ENCODE measurements at regions of chr5 and their contacts with region 1.

Region 1: DNA sequence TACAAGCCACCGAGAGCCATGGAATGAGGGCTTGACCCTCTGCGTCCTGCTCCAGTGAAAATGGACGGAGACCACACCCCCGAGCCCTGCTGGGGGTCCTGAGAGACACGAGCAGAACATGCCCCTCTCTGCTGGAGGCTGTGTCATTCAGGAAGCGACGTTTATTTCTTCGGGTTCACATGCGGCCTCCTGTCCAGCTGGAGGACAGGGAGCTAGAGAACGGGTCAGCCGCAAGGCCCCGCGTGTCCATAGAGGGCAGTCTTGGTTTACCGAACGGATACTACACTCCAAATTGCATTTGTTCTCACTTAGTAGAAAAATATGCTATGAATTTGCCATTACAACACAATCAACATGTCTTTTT is 36.1 kb downstream of the MRPL36 start:
- DNase-seq: peak; percentile 65
- H3K4me3 ChIP-seq: no peak overlapping the region
- H3K27ac ChIP-seq: no peak overlapping the region
- H3K4me1 ChIP-seq: no peaks in the 10 kb centered on the region
- H3K27me3 ChIP-seq: peaks cover 0 to 2% of the 10 kb centered on the region in 2 experiments
- CTCF ChIP-seq: peak; percentile 73 to 83
- POLR2A ChIP-seq: no peak

Region 2: DNA sequence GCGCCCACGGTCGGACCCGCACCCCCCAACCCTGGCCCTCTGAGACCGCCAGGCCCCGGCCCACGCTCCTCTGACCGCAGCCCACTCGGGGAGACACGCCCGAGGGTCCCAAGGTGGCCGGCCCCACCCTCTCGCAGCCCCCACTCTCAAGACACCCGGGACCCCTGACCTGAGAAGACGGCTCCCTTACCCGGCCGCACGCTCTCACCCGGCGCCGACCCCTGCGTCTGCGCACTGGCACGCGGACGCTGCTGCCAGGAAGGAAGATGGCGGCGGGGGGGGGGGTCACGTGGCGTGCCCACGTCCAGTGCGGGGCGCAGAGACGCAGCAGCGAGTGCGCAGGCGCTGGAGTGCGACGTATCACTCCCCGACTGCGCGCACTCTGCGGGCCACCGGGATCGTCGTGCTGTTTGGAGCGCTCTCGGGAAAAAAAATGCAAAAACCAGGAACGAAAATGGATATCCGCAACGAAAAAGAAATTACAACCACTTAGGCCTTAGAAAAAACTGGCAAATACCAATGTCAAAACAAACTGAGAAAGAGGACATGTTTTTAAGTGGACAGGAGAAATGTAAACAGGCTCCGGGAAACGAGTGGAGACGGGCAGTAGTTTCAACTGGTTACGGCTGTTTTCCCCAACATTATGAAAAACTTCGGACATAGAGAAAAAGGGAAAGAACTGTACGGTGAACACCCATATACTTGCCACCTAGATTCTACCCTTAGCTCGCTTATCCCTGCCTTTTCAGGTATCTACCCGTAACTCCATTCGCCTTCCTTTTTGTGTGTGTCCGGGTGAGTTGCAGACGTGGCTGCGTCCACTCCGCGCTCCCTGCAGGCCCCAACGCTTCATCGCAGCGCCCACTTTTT is 36.3 kb after region 1 on chr5 and contains the start of gene MRPL36:
- CTCF ChIA-PET with region 1: interaction called, 15 read pairs
- POLR2A ChIA-PET with region 1: no interaction called
- dilution Hi-C with region 1: no loop called
- intact Hi-C with region 1: loop called (anchors 1 kb)
- DNase-seq: peak; percentile 91
- H3K4me3 ChIP-seq: peak within 1 kb of the TSS; percentile 58 to 90 (median 62)
- H3K27ac ChIP-seq: peak within 1 kb of the TSS; percentile 70
- H3K4me1 ChIP-seq: peaks cover 21% of the 10 kb centered on the region
- H3K27me3 ChIP-seq: no peaks in the 10 kb centered on the region
- CTCF ChIP-seq: peak in 1 of 2 donors; percentile 13
- POLR2A ChIP-seq: peak; percentile 85
- total RNA-seq, gene MRPL36: 63.4 and 70.3 TPM in 2 replicates

Region 3: DNA sequence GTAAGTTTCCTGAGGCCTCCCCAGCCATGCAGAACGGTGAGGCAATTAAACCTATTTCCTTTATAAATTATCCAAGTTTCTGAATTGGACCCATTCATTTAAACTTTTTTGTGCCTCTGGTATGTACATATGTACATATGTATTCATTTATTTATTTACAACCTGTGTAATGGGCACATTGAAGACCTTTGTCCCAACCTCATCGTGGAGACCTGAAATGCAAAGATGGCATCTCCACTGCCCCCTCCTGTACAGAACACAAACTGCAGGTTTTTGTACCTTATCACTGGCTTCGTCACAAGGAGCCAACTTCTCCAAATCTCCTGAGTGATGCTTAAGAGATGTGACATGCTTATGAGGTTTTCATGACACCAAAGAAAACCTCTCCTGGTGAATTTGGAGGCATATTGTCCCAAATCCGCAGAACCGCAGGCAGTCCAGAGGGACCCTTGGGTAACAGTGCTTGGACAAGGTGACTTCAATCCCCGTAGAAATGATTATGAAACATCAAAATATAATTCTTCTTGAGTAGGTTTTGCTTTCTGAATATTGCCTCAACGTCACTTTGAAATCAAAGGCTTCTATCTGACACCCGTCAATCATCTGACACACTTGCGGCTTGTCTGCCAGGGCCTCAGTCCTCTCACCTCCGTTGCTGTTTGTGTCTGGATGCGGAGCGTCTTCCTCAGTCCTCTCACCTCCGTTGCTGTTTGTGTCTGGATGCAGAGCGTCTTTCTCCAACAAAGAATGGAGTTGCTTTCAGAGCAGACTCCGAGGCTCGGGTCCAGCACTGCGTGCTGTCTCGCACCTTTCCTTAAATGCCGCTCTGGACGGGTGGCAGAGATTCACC is 254.2 kb after region 1 on chr5:
- CTCF ChIA-PET with region 1: interaction called, 5 read pairs
- POLR2A ChIA-PET with region 1: no interaction called
- dilution Hi-C with region 1: no loop called
- intact Hi-C with region 1: loop called (anchors 1 kb)
- DNase-seq: peak; percentile 14
- H3K4me3 ChIP-seq: no peak overlapping the region
- H3K27ac ChIP-seq: no peak overlapping the region
- H3K4me1 ChIP-seq: no peaks in the 10 kb centered on the region
- H3K27me3 ChIP-seq: no peaks in the 10 kb centered on the region
- CTCF ChIP-seq: peak; percentile 51 to 53
- POLR2A ChIP-seq: no peak

Region 4: GRCh38 chr5:2038321-2039179 is 275.0 kb after region 1 on chr5:
- CTCF ChIA-PET with region 1: interaction called, 84 read pairs
- POLR2A ChIA-PET with region 1: no interaction called
- dilution Hi-C with region 1: no loop called
- intact Hi-C with region 1: loop called (anchors 1 kb)
- DNase-seq: peak; percentile 40
- H3K4me3 ChIP-seq: peak overlapping the region in 2 of 3 experiments; percentile 12 to 36
- H3K27ac ChIP-seq: no peak overlapping the region
- H3K4me1 ChIP-seq: no peaks in the 10 kb centered on the region
- H3K27me3 ChIP-seq: no peaks in the 10 kb centered on the region
- CTCF ChIP-seq: peak; percentile 74 to 80
- POLR2A ChIP-seq: no peak